Heart right ventricle (tissue), 16 donors: ENCODE measurements at regions of chr10 and their contacts with region 1.

Region 1: GRCh38 chr10:77603534-77603927 is 34.1 kb downstream of the KCNMA1 start:
- DNase-seq: no peak
- ATAC-seq: peak in 2 of 8 donors; percentile 25 to 32
- H3K4me3 ChIP-seq: no peak overlapping the region
- H3K27ac ChIP-seq: peak overlapping the region in 1 of 10 donors; percentile 38
- H3K4me1 ChIP-seq: peaks cover 0 to 29% (median 0%) of the 10 kb centered on the region in 9 donors
- H3K27me3 ChIP-seq: peaks cover 0 to 40% (median 5%) of the 10 kb centered on the region in 7 donors
- CTCF ChIP-seq: no peak

Region 2: DNA sequence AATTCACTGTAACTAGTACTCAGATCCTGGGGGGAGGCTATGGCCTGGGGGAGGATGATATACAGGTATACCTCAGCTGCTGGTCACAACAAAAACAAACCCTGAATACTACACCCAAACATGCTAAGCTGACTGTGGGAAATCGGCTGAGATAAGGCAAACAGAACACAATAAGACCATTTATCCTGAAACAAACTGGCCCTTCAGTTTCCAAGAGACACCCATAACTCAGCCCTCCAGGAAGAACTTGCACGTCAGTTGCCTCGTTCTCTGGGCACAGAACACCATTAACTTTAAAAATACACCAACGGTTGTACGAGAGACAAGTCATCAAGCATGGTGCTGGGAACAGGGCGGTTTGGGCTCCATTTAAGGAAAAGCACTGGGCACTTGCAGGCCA is 58.1 kb after region 1 on chr10:
- intact Hi-C with region 1: loop called in 1 of 10 experiments (anchors 2 kb)
- DNase-seq: no peak
- ATAC-seq: no peak
- H3K4me3 ChIP-seq: no peak overlapping the region
- H3K27ac ChIP-seq: no peak overlapping the region
- H3K4me1 ChIP-seq: no peaks in the 10 kb centered on the region
- H3K27me3 ChIP-seq: peaks cover 0 to 25% (median 20%) of the 10 kb centered on the region in 7 donors
- CTCF ChIP-seq: no peak